ENCODE measurements at regions of chr11 and their contacts with region 1.

Region 1: GRCh38 chr11:44538375-44539054 is 26.9 kb upstream of the CD82 start:
- DNase-seq: peak; percentile 82
- H3K4me3 Mint-ChIP-seq: no peak overlapping the region
- H3K27ac Mint-ChIP-seq: no peak overlapping the region
- H3K4me1 Mint-ChIP-seq: no peaks in the 10 kb centered on the region
- H3K27me3 Mint-ChIP-seq: peaks cover 34% of the 10 kb centered on the region
- CTCF ChIP-seq: peak; percentile 96

Region 2: DNA sequence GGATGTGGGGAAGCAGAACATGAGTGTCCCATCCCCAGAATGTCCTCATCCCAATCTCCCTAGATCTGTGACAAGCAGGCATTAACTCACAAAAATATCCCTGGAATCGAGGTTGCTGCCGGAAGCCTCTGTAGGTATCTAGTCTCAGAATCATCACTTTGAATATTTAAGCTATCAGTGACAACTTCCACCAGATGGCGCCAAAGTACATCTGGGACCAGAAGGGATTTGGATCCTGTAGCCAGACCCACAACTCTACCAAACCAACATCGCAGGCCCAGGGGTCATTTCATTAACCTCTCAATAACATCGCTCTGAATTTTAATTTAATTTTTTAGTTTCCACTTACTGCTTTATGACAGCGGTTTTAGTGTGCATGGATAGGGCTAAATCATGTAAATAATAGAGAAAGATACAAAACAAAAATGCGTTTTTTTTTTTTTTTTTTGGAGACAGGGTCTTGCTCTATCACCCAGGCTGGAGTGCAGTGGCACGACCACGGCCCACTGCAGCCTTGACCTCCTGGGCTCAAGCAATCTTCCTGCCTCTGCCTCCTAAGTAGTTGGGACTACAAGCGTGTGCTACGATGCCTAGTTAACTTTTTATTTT is 444.2 kb before region 1 on chr11:
- CTCF ChIA-PET with region 1: no interaction called
- intact Hi-C with region 1: loop called (anchors 5 kb)
- DNase-seq: peak; percentile 75
- H3K4me3 Mint-ChIP-seq: no peak overlapping the region
- H3K27ac Mint-ChIP-seq: no peak overlapping the region
- H3K4me1 Mint-ChIP-seq: peaks cover 16% of the 10 kb centered on the region
- H3K27me3 Mint-ChIP-seq: no peaks in the 10 kb centered on the region
- CTCF ChIP-seq: peak; percentile 50

Region 3: GRCh38 chr11:44133335-44133946 is 405.1 kb before region 1 on chr11:
- CTCF ChIA-PET with region 1: no interaction called
- intact Hi-C with region 1: loop called (anchors 2 kb)
- DNase-seq: peak; percentile 8
- H3K4me3 Mint-ChIP-seq: no peak overlapping the region
- H3K27ac Mint-ChIP-seq: no peak overlapping the region
- H3K4me1 Mint-ChIP-seq: no peaks in the 10 kb centered on the region
- H3K27me3 Mint-ChIP-seq: no peaks in the 10 kb centered on the region
- CTCF ChIP-seq: peak; percentile 40

Region 4: GRCh38 chr11:44269369-44270351 is 268.9 kb before region 1 on chr11:
- CTCF ChIA-PET with region 1: no interaction called
- intact Hi-C with region 1: no loop called
- DNase-seq: no peak
- H3K4me3 Mint-ChIP-seq: no peak overlapping the region
- H3K27ac Mint-ChIP-seq: no peak overlapping the region
- H3K4me1 Mint-ChIP-seq: no peaks in the 10 kb centered on the region
- H3K27me3 Mint-ChIP-seq: peaks cover 47% of the 10 kb centered on the region
- CTCF ChIP-seq: no peak

Region 5: DNA sequence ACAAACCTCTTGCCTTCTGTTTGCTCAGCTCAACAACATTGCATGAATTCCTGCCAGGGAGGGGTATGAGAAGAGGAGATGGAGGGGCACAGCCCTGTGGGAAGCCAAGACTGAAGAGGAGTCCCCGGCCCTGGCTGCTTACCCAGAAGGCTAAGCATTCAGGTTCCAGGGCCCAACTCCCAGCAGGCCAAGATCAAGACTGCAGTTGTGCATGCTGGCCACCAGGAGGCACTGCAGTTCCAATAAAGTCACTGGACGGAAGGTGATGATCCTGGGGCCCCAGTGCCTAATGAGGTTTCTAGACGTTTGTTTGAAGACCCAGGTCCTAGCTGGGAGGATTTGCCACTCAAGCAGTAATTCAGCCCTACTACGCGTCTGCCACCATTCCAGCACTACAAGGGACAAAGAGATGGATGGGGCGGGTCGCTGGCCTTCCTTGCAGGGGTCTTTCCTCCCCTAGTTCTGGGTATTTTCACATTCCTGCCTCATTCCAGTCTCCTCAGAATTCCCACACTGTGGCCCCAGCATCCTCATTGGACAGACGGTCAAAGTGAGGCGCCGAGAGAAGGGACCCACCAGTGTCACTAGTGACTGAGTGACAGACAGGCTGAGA is 252.1 kb before region 1 on chr11:
- CTCF ChIA-PET with region 1: interaction called, 4 read pairs
- intact Hi-C with region 1: loop called (anchors 1 kb)
- DNase-seq: peak; percentile 68
- H3K4me3 Mint-ChIP-seq: no peak overlapping the region
- H3K27ac Mint-ChIP-seq: no peak overlapping the region
- H3K4me1 Mint-ChIP-seq: no peaks in the 10 kb centered on the region
- H3K27me3 Mint-ChIP-seq: peaks cover 63% of the 10 kb centered on the region
- CTCF ChIP-seq: peak; percentile 93